Left cardiac atrium (tissue), 4 donors: ENCODE measurements at regions of chr4 and their contacts with region 1.

Region 1: DNA sequence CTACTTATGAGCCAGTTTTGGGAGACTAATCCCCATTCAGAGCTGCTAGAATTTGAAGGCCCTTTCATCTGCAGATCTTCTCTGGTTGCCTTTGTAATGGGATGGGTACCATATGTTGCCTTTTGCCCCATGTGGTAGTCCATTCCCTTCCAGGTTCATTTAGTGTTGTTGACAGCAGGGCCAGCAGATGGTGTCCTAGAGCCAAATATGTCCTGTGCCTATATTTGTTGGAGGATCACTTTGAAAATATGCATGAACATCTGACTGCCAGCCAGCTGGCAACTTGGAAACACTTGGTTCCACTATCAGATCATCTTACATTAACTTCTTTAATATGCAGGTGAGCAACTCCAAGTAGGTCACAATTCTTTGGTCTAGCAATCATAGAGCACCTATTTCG is 30.4 kb downstream of the CFAP299 start:
- DNase-seq: no peak
- ATAC-seq: peak; percentile 53 to 80

Region 2: GRCh38 chr4:80989921-80990544 is 624.1 kb after region 1 on chr4:
- intact Hi-C with region 1: loop called in 1 of 2 experiments (anchors 2 kb)
- DNase-seq: no peak
- ATAC-seq: no peak

Region 3: DNA sequence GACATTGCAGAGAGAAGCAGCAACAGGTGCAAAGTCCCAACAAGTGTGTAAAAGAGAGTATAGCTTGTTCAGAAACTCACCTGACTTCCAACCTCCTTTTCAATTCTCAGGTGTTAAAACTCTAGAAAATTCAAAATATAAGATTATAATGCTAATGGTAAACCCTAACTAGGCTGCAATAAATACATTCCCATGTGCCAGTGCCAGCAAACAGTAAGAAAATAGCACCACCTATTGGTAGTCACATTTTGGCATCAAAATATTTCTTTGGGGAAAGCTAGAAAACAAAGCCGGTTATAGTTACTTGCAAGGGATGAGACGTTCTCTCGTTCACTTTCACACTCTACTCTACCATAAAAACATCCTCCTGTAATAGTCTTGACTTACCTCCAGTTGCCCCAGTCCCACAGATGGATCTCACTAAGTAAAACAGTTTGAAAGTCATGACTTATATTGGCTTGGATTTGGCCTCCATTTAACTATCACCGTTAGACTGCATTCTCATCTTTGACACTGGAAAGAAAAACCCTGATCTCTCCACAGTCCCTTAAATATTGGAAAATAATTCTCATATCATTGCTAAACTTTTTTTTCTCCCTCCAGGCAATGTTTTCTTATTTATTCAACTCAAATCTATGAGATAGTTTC is 674.2 kb after region 1 on chr4:
- intact Hi-C with region 1: loop called in 1 of 2 experiments (anchors 10 kb)
- DNase-seq: no peak
- ATAC-seq: peak in 1 of 2 donors; percentile 24

Region 4: DNA sequence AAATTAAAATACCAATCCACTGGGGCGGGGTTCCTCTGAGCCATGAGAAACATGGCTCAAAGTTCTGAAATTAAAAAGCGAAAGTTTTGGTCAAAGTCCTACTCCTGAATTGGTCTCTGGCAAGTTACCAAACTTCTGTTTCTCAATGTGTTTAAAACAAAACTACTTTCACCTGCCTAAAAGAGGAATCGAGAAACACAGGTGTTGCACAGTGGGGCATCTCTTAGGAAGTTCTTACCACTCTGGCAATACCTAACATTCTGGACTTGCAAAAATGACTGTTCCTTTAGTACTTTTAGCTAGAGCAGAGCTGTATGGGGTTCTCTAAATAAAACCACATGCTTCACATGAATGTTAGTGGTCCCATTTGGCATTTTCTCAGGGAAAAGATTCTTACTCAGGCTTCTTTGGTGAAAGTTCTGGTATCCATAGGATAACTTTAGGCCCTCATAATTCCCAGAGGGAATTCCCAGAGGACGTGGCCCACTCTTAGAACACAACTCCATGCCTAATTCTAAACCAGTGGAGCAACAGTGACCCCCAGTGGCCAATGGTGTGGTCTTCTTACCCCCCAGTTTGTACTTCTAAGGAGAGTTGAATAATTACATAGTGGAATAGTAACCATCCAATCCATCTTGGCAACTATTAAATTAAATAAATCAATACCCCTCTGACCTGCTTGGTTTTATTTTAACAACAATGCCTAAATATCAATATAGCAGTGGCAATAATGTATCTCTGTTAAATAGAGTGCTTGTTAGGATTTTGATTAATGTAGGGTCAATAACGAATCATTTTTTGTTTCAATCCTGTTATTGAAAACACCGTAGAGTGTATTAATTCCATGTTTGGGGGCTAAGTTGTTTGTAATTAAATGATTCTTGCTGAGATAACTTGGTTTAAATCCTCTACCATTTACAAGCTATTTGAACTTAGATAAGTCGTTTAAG is 686.5 kb after region 1 on chr4:
- intact Hi-C with region 1: loop called (anchors 5 to 10 kb)
- DNase-seq: peak; percentile 53
- ATAC-seq: peak; percentile 75 to 86